ENCODE measurements at regions of chrX and their contacts with region 1.

Region 1: DNA sequence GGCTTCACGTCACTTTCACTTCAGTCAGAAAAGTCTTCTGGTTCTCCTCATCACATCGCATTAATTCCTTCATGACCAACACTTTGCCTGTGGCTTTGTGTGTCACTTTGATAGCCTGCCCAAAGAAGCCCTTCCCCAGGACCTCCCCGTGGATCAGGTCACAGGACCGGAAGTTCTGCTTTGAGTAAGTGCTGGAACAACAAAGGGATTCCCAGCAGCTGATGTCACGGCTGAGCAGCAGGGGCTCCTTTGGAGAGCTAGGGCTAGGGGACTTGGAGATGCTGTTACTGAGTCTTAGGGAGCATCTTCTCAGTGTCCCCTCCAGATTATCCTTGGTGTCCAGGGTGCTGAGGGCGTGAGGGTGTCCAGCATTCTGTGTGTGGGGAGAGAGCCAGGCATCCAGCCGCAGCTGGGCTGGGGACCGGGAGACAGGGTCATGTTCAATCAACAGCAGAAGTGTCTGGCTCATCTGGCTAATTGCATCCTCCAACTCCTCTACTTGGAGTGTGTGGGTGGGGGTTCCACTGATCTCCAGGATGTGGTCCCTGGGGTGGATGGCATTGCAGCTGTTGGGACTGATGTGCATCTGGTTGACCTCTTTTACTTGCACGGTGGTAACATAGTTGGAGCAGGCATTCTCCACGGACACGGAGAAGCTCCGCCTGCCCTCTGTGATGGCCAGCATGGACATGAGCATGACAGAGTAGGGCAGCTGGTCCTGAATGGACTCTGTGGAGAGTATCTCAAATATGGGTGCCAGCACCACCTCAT is 39.2 kb upstream of the ARHGAP6 start:
- DNase-seq: no peak
- H3K4me3 ChIP-seq: no peak overlapping the region
- H3K27ac ChIP-seq: no peak overlapping the region
- H3K4me1 ChIP-seq: no peaks in the 10 kb centered on the region
- H3K27me3 ChIP-seq: peaks cover 0 to 20% of the 10 kb centered on the region in 2 donors
- CTCF ChIP-seq: no peak
- POLR2A ChIP-seq: no peak

Region 2: DNA sequence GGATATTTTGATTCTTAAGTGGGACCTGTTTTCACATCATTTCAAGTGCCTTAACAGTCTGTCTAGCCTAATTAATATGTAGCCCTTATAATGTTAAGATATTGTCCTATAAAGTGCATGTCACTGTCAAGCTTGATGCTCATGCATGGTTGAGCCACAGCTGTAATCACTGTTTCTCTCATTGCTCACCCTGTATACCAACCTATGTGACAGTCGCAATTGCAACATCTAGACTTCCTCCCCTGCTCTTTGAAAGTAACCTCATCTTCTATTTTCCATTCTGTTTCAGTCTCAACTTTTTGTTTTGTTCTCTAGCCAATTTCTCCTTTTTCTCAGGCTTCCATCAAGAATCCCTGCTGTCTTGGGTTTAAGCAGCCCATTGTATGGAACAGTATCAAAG is 28.7 kb after region 1 on chrX:
- intact Hi-C with region 1: no loop called
- DNase-seq: no peak
- H3K4me3 ChIP-seq: no peak overlapping the region
- H3K27ac ChIP-seq: no peak overlapping the region
- H3K4me1 ChIP-seq: no peaks in the 10 kb centered on the region
- H3K27me3 ChIP-seq: peaks cover 0 to 57% of the 10 kb centered on the region in 2 donors
- CTCF ChIP-seq: no peak
- POLR2A ChIP-seq: no peak

Region 3: GRCh38 chrX:12819231-12819630 is 1114.3 kb after region 1 on chrX:
- intact Hi-C with region 1: loop called (anchors 5 kb)
- DNase-seq: no peak
- H3K4me3 ChIP-seq: no peak overlapping the region
- H3K27ac ChIP-seq: no peak overlapping the region
- H3K4me1 ChIP-seq: no peaks in the 10 kb centered on the region
- H3K27me3 ChIP-seq: peaks cover 0 to 18% of the 10 kb centered on the region in 2 donors
- CTCF ChIP-seq: no peak
- POLR2A ChIP-seq: no peak